Activated CD4-positive, alpha-beta T cell treated with anti-CD3 and anti-CD28 coated beads for 36 hours (primary cell): ENCODE measurements at regions of chr1 and their contacts with region 1.

Region 1: GRCh38 chr1:93692983-93693591 is 11.4 kb upstream of the BCAR3 start:
- DNase-seq: peak; percentile 76
- ATAC-seq: peak; percentile 95
- H3K4me3 Mint-ChIP-seq: no peak overlapping the region
- H3K27ac Mint-ChIP-seq: peak overlapping the region; percentile 55
- H3K4me1 Mint-ChIP-seq: peaks cover 17% of the 10 kb centered on the region
- H3K27me3 Mint-ChIP-seq: peaks cover 4% of the 10 kb centered on the region

Region 2: DNA sequence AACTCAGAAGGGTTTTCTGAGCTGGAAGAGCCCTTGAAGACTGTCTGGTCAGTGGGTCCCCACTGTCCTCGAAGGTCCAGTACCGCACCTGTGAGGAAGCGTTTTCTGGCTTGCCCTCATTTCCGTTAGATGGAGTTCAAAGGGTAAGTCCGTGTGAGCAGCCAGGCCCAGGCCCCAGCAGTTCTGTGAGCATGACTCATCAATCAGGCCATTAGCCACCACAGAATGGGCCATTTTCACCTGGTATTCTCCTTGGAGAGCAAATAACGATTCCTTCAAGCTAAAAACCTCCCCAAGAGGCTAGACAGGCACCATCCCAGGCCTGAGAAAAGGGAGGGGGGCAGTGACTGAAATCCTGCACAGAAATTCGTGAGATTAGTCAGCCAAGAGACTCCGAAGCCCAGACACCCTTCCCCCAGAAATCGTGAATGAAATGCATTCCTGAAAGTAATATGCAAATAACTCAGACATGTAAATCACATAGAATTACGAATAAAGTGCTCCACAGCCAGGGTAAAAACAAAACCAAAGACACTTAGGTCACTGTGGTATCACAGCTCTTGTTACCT is 77.4 kb before region 1 on chr1:
- CTCF ChIA-PET with region 1: no interaction called
- POLR2A ChIA-PET with region 1: no interaction called
- intact Hi-C with region 1: no loop called
- DNase-seq: peak; percentile 80
- ATAC-seq: peak; percentile 86
- H3K4me3 Mint-ChIP-seq: peak overlapping the region; percentile 15
- H3K27ac Mint-ChIP-seq: peak overlapping the region; percentile 86
- H3K4me1 Mint-ChIP-seq: peaks cover 22% of the 10 kb centered on the region
- H3K27me3 Mint-ChIP-seq: peaks cover 6% of the 10 kb centered on the region

Region 3: GRCh38 chr1:93708734-93709481 is 15.8 kb after region 1 on chr1:
- CTCF ChIA-PET with region 1: interaction called, 4 read pairs
- POLR2A ChIA-PET with region 1: no interaction called
- intact Hi-C with region 1: loop called (anchors 1 kb)
- DNase-seq: peak; percentile 26
- ATAC-seq: peak; percentile 7
- H3K4me3 Mint-ChIP-seq: no peak overlapping the region
- H3K27ac Mint-ChIP-seq: no peak overlapping the region
- H3K4me1 Mint-ChIP-seq: peaks cover 39% of the 10 kb centered on the region
- H3K27me3 Mint-ChIP-seq: peaks cover 19% of the 10 kb centered on the region

Region 4: DNA sequence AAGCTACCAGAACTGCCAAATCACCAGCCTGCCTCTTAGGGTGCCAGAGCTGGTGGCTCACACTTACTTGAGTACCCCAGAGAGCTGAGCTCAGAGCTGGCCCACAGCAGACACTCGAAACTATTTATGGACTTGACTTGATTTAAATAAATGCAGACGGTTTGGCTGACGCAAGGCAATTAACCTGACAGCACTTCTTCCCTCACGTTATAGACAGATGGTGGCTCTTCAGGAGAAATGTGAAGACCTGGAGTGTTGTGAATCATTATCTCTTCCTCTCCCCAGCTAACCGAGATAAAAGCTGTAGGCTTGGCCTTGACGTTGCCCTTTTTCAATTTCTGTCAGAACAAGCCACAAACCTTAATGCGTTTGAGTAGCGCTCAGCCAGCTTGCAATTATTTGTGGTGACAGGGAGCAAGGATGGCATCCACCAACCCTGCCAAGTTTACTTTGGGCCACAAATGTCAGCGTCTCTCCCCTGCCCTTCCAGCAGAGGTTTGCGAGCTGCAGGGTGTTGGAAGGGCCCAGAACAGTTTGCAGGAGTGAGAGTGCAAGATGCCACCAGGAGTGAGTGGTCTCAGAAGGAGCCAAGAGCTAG is 22.5 kb after region 1 on chr1:
- CTCF ChIA-PET with region 1: no interaction called
- POLR2A ChIA-PET with region 1: interaction called, 5 read pairs
- intact Hi-C with region 1: loop called (anchors 1 kb)
- DNase-seq: peak; percentile 61
- ATAC-seq: peak; percentile 73
- H3K4me3 Mint-ChIP-seq: no peak overlapping the region
- H3K27ac Mint-ChIP-seq: no peak overlapping the region
- H3K4me1 Mint-ChIP-seq: peaks cover 44% of the 10 kb centered on the region
- H3K27me3 Mint-ChIP-seq: peaks cover 12% of the 10 kb centered on the region

Region 5: GRCh38 chr1:94383966-94384408 is 690.9 kb after region 1 on chr1:
- CTCF ChIA-PET with region 1: no interaction called
- POLR2A ChIA-PET with region 1: no interaction called
- intact Hi-C with region 1: loop called in 1 of 2 experiments (anchors 10 kb)
- DNase-seq: peak; percentile 22
- ATAC-seq: peak; percentile 76
- H3K4me3 Mint-ChIP-seq: peak overlapping the region; percentile 61
- H3K27ac Mint-ChIP-seq: peak overlapping the region; percentile 92
- H3K4me1 Mint-ChIP-seq: peaks cover 62% of the 10 kb centered on the region
- H3K27me3 Mint-ChIP-seq: no peaks in the 10 kb centered on the region